ENCODE measurements at regions of chr15 and their contacts with region 1.

Region 1: GRCh38 chr15:94324117-94324826 is 92.9 kb downstream of the MCTP2 start:
- DNase-seq: peak; percentile 76
- ATAC-seq: peak; percentile 87
- H3K4me3 Mint-ChIP-seq: no peak overlapping the region
- H3K27ac Mint-ChIP-seq: no peak overlapping the region
- H3K4me1 Mint-ChIP-seq: peaks cover 4% of the 10 kb centered on the region
- H3K27me3 Mint-ChIP-seq: no peaks in the 10 kb centered on the region

Region 2: DNA sequence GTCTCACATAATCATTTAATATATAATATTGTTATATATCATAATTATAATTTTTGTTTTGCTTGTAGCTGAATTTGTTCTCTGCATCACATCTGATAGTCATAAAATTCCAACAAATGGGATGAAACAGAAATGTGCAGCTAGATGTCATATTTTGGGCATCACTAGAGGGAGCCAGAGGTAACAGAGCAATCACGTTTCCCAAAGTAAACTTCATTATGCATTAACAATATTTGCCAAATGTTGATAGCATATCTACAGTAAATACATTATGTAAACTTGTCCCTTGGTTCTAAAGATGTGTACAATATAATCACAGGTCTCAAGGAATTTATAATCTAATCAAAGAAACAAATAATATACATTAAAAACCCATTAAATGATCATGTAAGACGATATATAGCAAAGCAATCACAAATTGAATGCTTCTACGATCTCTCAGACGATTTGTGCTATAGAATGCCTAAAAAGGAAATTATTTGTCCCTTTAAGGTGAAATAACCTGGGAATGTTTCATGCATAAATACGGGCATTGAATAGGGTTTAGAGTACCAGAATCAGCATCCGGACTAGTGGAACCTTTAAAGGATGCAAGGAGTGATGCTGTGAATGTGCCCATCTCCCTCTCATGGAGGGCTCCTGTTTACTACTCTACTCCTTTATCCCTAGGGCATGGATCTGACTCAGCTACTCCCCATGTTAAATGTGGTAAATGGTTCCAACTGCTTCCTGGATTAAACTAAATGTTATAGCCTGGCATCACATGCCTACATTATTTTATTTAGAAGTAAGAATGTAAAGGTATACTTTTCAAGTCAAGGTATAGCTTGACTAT is 327.0 kb before region 1 on chr15:
- CTCF ChIA-PET with region 1: no interaction called
- POLR2A ChIA-PET with region 1: no interaction called
- intact Hi-C with region 1: loop called in 1 of 2 experiments (anchors 10 kb)
- DNase-seq: no peak
- ATAC-seq: no peak
- H3K4me3 Mint-ChIP-seq: no peak overlapping the region
- H3K27ac Mint-ChIP-seq: no peak overlapping the region
- H3K4me1 Mint-ChIP-seq: no peaks in the 10 kb centered on the region
- H3K27me3 Mint-ChIP-seq: no peaks in the 10 kb centered on the region

Region 3: GRCh38 chr15:94230956-94231722 is 93.1 kb before region 1 on chr15 and contains the start of gene MCTP2:
- CTCF ChIA-PET with region 1: interaction called, 13 read pairs
- POLR2A ChIA-PET with region 1: interaction called, 4 read pairs
- intact Hi-C with region 1: loop called (anchors 1 to 5 kb)
- DNase-seq: peak; percentile 91
- ATAC-seq: peak; percentile 82
- H3K4me3 Mint-ChIP-seq: peak within 1 kb of the TSS; percentile 80
- H3K27ac Mint-ChIP-seq: peak within 1 kb of the TSS; percentile 94
- H3K4me1 Mint-ChIP-seq: peaks cover 67% of the 10 kb centered on the region
- H3K27me3 Mint-ChIP-seq: peaks cover 11% of the 10 kb centered on the region
- total RNA-seq, gene MCTP2: 25.2 to 27.8 TPM

Region 4: DNA sequence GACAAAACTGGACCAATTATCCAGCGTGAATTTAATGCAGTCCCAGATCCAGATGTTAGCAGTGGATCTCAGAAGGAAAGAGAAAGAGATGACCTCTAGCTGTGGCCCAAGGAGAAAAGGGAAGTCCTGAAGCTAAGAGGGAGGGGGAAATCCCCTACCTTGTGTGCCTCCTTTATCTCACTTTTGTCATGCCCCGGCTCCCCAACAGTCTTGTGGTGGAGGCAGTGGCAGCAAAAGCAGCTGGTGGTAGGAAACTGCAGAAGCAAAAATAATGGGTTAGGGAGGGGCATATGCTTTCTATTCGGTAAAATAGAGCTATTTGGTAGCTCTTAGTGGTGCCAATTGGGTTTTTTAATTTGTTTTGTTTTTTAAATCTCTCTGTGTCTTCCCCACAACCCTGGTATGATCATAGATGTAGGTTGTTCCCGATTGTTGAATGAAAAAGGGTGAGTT is 36.5 kb before region 1 on chr15:
- CTCF ChIA-PET with region 1: interaction called, 16 read pairs
- POLR2A ChIA-PET with region 1: no interaction called
- intact Hi-C with region 1: no loop called
- DNase-seq: peak; percentile 67
- ATAC-seq: peak; percentile 96
- H3K4me3 Mint-ChIP-seq: peak overlapping the region; percentile 42
- H3K27ac Mint-ChIP-seq: peak overlapping the region; percentile 49
- H3K4me1 Mint-ChIP-seq: peaks cover 37% of the 10 kb centered on the region
- H3K27me3 Mint-ChIP-seq: no peaks in the 10 kb centered on the region

Region 5: DNA sequence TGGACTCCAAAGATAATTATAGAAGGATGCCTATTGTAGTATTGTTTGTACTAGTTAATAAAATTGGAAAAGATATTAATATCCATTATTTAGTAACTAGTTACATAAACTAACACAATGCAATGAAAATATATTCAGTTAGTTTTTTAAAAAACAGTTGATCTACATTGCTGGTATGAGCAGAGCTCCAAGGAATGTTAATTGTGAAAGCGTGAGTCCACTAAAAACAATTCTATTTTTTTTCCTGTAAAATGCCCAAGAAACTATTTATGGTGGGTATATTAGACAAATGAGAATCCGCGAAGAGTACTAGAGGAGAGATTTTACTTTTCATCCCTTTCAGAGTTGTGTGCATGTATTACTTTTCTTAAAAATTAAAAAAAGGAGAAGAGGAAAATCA is 11.3 kb after region 1 on chr15:
- CTCF ChIA-PET with region 1: interaction called, 41 read pairs
- POLR2A ChIA-PET with region 1: no interaction called
- intact Hi-C with region 1: no loop called
- DNase-seq: no peak
- ATAC-seq: no peak
- H3K4me3 Mint-ChIP-seq: no peak overlapping the region
- H3K27ac Mint-ChIP-seq: no peak overlapping the region
- H3K4me1 Mint-ChIP-seq: no peaks in the 10 kb centered on the region
- H3K27me3 Mint-ChIP-seq: no peaks in the 10 kb centered on the region

Measured in activated CD4-positive, alpha-beta T cell treated with anti-CD3 and anti-CD28 coated beads for 36 hours (primary cell).